Breast epithelium (tissue), 4 donors: ENCODE measurements at regions of chr16 and their contacts with region 1.

Region 1: DNA sequence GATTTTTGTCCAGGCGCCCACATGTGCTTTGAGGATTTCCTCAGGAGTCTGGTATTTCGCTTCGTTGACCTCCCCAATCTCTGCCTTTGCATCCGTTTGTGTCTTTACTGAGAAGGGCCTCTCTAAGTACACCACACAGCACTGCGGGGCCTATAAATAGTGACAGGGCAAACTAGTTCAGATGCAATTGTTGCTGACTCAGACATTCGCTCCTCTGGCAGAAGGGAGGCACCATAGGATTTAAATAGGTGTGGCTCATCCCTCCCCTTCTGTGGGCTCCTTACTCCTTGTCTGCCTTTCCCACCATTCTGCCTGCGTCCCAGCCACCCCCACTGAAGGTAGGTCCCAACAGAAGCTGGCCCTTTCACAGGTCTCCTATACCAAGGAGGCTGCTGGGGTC is 192.3 kb downstream of the SHISA9 start:
- DNase-seq: no peak
- H3K4me3 ChIP-seq: no peak overlapping the region
- H3K27ac ChIP-seq: no peak overlapping the region
- H3K4me1 ChIP-seq: no peaks in the 10 kb centered on the region
- H3K27me3 ChIP-seq: no peaks in the 10 kb centered on the region
- CTCF ChIP-seq: no peak
- POLR2A ChIP-seq: no peak

Region 2: GRCh38 chr16:12896562-12896961 is 197.1 kb before region 1 on chr16:
- intact Hi-C with region 1: no loop called
- DNase-seq: no peak
- H3K4me3 ChIP-seq: no peak overlapping the region
- H3K27ac ChIP-seq: no peak overlapping the region
- H3K4me1 ChIP-seq: no peaks in the 10 kb centered on the region
- H3K27me3 ChIP-seq: peaks cover 0 to 26% of the 10 kb centered on the region in 2 donors
- CTCF ChIP-seq: peak in 2 of 3 donors; percentile 22 to 40
- POLR2A ChIP-seq: no peak

Region 3: GRCh38 chr16:13143551-13143950 is 49.9 kb after region 1 on chr16:
- intact Hi-C with region 1: loop called (anchors 2 kb)
- DNase-seq: no peak
- H3K4me3 ChIP-seq: no peak overlapping the region
- H3K27ac ChIP-seq: no peak overlapping the region
- H3K4me1 ChIP-seq: no peaks in the 10 kb centered on the region
- H3K27me3 ChIP-seq: no peaks in the 10 kb centered on the region
- CTCF ChIP-seq: no peak
- POLR2A ChIP-seq: no peak